Endothelial cell of umbilical vein (primary cell): ENCODE measurements at regions of chr6 and their contacts with region 1.

Region 1: DNA sequence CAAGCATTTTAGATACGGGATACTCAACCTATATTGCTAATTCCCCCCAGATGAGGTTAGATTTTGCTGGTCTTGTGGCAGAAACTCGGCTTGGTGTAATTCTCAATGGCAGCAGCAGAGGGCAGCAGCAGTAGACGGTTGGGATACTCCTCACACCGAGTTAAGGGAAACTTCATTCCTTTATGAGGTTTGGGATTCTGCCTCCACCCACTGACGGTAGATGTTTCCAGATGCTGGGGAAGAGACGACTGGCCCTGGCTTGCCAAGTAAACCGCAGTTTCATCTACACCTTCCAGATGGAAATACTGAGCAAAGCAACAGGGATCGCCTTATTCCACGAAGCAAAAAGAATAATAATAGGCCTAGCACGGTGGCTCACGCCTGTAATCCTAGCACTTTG is 8.2 kb upstream of the TBC1D7 start:
- DNase-seq: peak; percentile 85
- H3K4me3 ChIP-seq: no peak overlapping the region
- H3K27ac ChIP-seq: no peak overlapping the region
- H3K4me1 ChIP-seq: peaks cover 13% of the 10 kb centered on the region
- H3K27me3 ChIP-seq: no peaks in the 10 kb centered on the region
- CTCF ChIP-seq: peak; percentile 82 to 85
- POLR2A ChIP-seq: no peak

Region 2: DNA sequence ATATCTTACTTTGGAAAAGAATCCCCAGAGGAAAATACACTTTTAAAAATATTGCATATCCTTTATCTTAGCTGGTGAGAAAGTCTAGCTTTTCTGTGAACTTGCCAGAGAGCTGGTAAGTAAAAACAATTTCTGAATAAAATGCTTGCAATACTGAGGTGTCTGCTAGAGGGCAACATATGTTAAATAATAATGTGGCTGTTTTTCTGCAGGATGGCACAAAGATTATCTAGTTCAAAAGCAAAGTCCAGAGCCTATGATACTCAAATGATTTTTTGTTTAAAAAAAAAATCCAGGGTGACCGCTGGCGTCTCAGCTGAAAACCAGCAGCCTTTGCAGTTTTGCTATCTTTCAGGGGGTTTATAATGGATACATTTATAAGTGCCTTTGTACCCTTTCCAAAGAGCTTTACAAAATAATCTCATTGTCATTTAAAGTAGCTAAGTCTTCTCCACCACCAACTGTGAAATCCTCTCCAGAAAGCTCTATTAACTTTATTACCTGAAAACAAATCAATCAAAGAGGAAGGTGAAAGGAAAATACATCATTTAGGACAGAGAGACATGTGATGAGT is 425.1 kb before region 1 on chr6:
- CTCF ChIA-PET with region 1: interaction called, 98 read pairs
- POLR2A ChIA-PET with region 1: no interaction called
- dilution Hi-C with region 1: no loop called
- intact Hi-C with region 1: loop called (anchors 1 kb)
- DNase-seq: peak; percentile 63
- H3K4me3 ChIP-seq: no peak overlapping the region
- H3K27ac ChIP-seq: no peak overlapping the region
- H3K4me1 ChIP-seq: no peaks in the 10 kb centered on the region
- H3K27me3 ChIP-seq: peaks cover 2 to 10% of the 10 kb centered on the region in 2 experiments
- CTCF ChIP-seq: peak; percentile 26 to 27
- POLR2A ChIP-seq: no peak

Region 3: GRCh38 chr6:13355043-13355951 is 18.7 kb after region 1 on chr6:
- CTCF ChIA-PET with region 1: interaction called, 4 read pairs
- POLR2A ChIA-PET with region 1: no interaction called
- dilution Hi-C with region 1: no loop called
- intact Hi-C with region 1: loop called (anchors 1 kb)
- DNase-seq: peak; percentile 69
- H3K4me3 ChIP-seq: no peak overlapping the region
- H3K27ac ChIP-seq: peak overlapping the region; percentile 89
- H3K4me1 ChIP-seq: peaks cover 28% of the 10 kb centered on the region
- H3K27me3 ChIP-seq: no peaks in the 10 kb centered on the region
- CTCF ChIP-seq: no peak
- POLR2A ChIP-seq: no peak

Region 4: GRCh38 chr6:13422681-13423221 is 86.2 kb after region 1 on chr6:
- CTCF ChIA-PET with region 1: interaction called, 7 read pairs
- POLR2A ChIA-PET with region 1: interaction called, 3 read pairs
- dilution Hi-C with region 1: no loop called
- intact Hi-C with region 1: loop called (anchors 2 kb)
- DNase-seq: peak; percentile 95
- H3K4me3 ChIP-seq: peak overlapping the region in 1 of 3 experiments; percentile 19
- H3K27ac ChIP-seq: peak overlapping the region; percentile 92
- H3K4me1 ChIP-seq: peaks cover 44% of the 10 kb centered on the region
- H3K27me3 ChIP-seq: no peaks in the 10 kb centered on the region
- CTCF ChIP-seq: no peak
- POLR2A ChIP-seq: no peak

Region 5: DNA sequence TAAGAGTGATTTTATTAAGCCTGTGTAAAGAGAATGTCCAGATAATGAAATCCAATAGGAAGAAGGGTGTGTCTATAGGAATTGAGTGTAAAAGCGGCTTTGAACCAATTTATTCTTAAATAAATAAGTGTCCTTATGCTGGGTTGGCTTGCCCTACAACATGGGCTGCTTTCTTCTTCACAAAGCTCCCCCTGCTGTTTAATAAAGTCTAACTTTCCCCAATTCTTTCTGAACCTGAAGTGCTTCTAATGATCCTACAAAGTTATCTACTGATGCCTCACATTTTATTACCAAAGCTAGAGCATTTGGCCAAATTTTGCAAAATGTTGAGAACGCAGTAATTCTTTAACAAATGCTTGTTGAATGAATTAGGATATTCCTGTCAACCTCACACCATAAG is 201.5 kb after region 1 on chr6:
- CTCF ChIA-PET with region 1: interaction called, 37 read pairs
- POLR2A ChIA-PET with region 1: no interaction called
- dilution Hi-C with region 1: no loop called
- intact Hi-C with region 1: loop called (anchors 1 kb)
- DNase-seq: peak; percentile 68
- H3K4me3 ChIP-seq: no peak overlapping the region
- H3K27ac ChIP-seq: no peak overlapping the region
- H3K4me1 ChIP-seq: peaks cover 9% of the 10 kb centered on the region
- H3K27me3 ChIP-seq: no peaks in the 10 kb centered on the region
- CTCF ChIP-seq: peak; percentile 23 to 25
- POLR2A ChIP-seq: no peak

Region 6: DNA sequence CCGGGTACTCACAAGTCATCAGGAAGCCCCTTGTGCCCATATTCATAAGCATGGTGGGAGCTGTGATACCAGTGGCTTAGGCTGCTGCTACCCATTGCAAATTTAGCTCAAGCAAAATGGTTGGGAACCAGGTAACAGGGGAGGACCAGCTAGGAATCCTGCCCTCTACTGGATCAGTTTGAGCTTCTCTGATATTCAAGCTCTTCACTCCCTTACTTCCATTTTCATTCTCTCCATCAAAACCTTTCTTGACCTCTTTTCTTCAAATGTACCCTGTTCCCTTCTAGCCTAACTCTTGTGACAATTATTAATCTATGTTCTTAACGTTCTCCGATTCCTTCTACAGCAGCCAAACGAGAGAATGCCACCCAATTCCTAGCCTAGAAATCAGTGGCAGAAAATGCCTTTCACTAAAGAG is 288.3 kb after region 1 on chr6:
- CTCF ChIA-PET with region 1: interaction called, 10 read pairs
- POLR2A ChIA-PET with region 1: no interaction called
- dilution Hi-C with region 1: no loop called
- intact Hi-C with region 1: loop called (anchors 2 kb)
- DNase-seq: peak; percentile 40
- H3K4me3 ChIP-seq: no peak overlapping the region
- H3K27ac ChIP-seq: no peak overlapping the region
- H3K4me1 ChIP-seq: no peaks in the 10 kb centered on the region
- H3K27me3 ChIP-seq: no peaks in the 10 kb centered on the region
- CTCF ChIP-seq: peak; percentile 54 to 63
- POLR2A ChIP-seq: peak; percentile 47